ENCODE measurements at regions of chr7 and their contacts with region 1.

Region 1: DNA sequence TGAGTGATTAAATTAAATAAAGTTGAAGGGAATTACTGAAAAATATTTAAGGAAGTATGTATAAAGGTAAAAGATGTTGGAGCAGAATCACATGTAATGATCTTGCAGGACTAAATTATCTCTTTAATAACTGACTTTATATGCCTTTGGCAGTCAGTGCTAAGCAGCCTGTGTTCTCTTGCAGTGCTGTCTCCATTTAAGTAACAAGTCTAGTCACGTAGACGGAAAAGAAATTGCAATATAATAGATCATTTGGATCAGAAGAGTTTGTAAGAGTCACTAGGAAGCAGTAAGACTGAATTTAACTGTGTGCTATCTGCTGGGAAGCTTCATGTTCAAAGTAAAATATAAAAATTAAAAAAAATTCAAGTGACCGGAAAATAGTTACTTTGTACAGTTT is 21.4 kb downstream of the BZW2 start:
- DNase-seq: no peak
- H3K4me3 ChIP-seq: no peak overlapping the region
- H3K27me3 ChIP-seq: no peaks in the 10 kb centered on the region
- CTCF ChIP-seq: no peak

Region 2: GRCh38 chr7:16465469-16466361 is 201.6 kb before region 1 on chr7 and contains the start of gene SOSTDC1:
- CTCF ChIA-PET with region 1: no interaction called
- POLR2A ChIA-PET with region 1: no interaction called
- DNase-seq: no peak
- H3K4me3 ChIP-seq: no peak within 1 kb of the TSS
- H3K27me3 ChIP-seq: peaks cover 2% of the 10 kb centered on the region; the same call in 1 of the 2 replicates
- CTCF ChIP-seq: no peak
- polyA plus RNA-seq, gene SOSTDC1: not detected in 2 replicates

Region 3: GRCh38 chr7:16695621-16696237 is 28.4 kb after region 1 on chr7:
- CTCF ChIA-PET with region 1: no interaction called
- POLR2A ChIA-PET with region 1: interaction called, 12 read pairs
- DNase-seq: no peak
- H3K4me3 ChIP-seq: no peak overlapping the region
- H3K27me3 ChIP-seq: no peaks in the 10 kb centered on the region
- CTCF ChIP-seq: peak; percentile 52

Region 4: DNA sequence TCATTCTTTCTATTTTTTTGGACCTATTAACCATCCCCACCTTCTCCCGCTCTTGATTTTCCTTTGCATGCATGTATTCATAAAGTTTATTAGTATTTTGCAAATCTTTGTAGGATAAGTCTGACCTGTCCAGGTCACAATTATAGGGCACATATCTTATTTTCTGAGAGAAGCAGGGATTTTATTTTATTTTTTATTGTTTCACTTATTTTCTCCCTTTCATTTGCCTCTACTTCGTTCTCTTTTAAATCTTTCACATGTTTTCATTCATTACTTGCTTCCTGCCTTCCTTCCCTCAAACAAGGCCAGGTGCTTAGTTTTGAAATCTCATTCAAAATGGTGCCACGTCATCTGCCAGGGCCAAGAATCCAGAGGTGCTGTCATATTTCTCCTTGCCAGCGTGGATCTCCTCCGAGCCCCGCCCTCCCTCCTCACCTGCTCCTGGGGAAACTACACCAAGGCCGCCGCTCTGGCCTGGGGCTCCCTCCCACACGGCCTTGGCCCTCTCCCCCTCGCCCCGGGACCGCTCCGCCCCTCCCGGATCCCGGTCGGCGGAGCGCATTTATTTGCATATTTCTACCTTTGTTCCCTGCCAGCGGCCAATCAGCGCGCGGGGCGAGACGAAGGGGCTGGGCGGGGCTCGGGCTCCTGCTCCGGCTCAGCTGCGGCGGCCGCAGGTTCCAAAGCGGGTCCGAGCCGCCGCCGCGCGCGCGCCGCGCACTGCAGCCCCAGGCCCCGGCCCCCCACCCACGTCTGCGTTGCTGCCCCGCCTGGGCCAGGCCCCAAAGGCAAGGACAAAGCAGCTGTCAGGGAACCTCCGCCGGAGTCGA is 86.0 kb after region 1 on chr7 and contains the start of gene TSPAN13:
- CTCF ChIA-PET with region 1: no interaction called
- POLR2A ChIA-PET with region 1: no interaction called
- DNase-seq: no peak
- H3K4me3 ChIP-seq: peak within 1 kb of the TSS; percentile 78
- H3K27me3 ChIP-seq: no peaks in the 10 kb centered on the region
- CTCF ChIP-seq: no peak
- polyA plus RNA-seq, gene TSPAN13: 4.6 and 12.6 TPM in 2 replicates